SK-N-SH (cell line): ENCODE measurements at regions of chr1 and their contacts with region 1.

Region 1: GRCh38 chr1:22704440-22705067 is 6.1 kb upstream of the EPHB2 start:
- DNase-seq: peak; percentile 83
- H3K4me3 ChIP-seq: no peak overlapping the region; a peak in 1 of 4 replicates
- H3K27ac ChIP-seq: no peak overlapping the region
- H3K4me1 ChIP-seq: peaks cover 2 to 8% of the 10 kb centered on the region in 2 experiments; a peak in 2 of 4 replicates
- H3K27me3 ChIP-seq: no peaks in the 10 kb centered on the region
- CTCF ChIP-seq: peak; percentile 88
- EP300 ChIP-seq: no peak
- RAD21 ChIP-seq: peak; percentile 89

Region 2: DNA sequence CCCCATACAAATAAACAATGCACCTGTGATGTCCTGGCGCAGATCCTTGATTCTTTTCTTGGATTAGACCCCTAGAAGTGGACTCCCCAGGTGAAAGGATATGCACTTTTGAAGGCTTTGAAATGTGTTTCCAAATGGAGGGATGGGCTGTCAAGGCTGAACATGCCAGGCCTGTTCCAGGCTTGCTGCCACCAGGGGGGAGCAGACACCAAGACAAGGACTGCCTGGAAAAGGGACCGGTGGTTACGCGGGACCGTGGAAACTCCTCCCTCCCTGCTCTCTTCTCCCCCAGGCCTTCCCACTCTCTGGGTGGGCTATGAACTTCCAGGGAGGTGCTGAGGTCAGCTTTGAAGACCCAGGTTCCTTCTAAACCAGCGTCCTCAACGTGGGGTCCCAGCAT is 38.8 kb before region 1 on chr1:
- CTCF ChIA-PET with region 1: interaction called, 21 read pairs
- POLR2A ChIA-PET with region 1: no interaction called
- DNase-seq: peak; percentile 77
- H3K4me3 ChIP-seq: no peak overlapping the region; a peak in 1 of 4 replicates
- H3K27ac ChIP-seq: no peak overlapping the region
- H3K4me1 ChIP-seq: no peaks in the 10 kb centered on the region
- H3K27me3 ChIP-seq: peaks cover 20% of the 10 kb centered on the region; the same call in 1 of the 2 replicates
- CTCF ChIP-seq: peak; percentile 69
- EP300 ChIP-seq: no peak
- RAD21 ChIP-seq: peak; percentile 87

Region 3: DNA sequence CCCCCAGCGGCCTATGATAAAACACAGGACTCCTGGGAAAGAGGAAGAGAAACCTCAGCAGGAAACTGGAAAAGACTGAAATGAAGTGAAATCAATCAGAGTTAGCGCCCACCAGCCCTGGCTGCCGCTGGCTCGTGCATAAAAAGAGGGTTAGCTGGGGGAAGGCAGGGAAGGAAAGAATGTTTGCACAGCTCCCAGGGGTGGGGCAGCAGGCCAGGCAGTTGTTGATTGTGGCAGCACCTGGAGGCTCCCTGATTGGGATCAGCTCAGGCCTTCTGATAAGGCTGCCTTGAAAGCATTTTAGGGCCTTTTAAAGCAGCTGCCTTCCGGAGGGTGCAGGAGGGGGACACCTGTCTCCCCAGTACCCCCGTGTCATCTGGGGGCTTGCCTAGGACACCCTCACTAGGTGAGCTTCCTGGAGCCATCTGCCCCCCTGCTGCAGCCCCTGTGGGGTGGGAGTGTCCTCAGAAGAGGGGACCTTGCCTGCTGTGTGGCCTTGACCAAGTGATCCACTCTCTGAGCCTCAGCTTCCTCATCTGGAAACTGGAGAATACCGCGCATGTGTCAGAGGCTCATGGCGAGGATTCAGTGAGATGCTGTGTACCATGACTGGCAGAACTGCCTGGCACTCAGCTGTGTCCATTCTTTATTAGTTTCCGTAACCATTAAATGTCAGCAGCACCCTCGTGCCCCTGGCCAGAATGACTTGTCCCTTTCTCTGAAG is 12.6 kb after region 1 on chr1:
- CTCF ChIA-PET with region 1: interaction called, 20 read pairs
- POLR2A ChIA-PET with region 1: interaction called, 3 read pairs
- DNase-seq: no peak
- H3K4me3 ChIP-seq: no peak overlapping the region
- H3K27ac ChIP-seq: peak overlapping the region in 1 of 2 experiments; percentile 2; a peak in 1 of 4 replicates
- H3K4me1 ChIP-seq: peaks cover 0 to 25% of the 10 kb centered on the region in 2 experiments; a peak in 1 of 4 replicates
- H3K27me3 ChIP-seq: no peaks in the 10 kb centered on the region
- CTCF ChIP-seq: no peak
- EP300 ChIP-seq: no peak; a peak in 1 of 4 replicates
- RAD21 ChIP-seq: no peak

Region 4: DNA sequence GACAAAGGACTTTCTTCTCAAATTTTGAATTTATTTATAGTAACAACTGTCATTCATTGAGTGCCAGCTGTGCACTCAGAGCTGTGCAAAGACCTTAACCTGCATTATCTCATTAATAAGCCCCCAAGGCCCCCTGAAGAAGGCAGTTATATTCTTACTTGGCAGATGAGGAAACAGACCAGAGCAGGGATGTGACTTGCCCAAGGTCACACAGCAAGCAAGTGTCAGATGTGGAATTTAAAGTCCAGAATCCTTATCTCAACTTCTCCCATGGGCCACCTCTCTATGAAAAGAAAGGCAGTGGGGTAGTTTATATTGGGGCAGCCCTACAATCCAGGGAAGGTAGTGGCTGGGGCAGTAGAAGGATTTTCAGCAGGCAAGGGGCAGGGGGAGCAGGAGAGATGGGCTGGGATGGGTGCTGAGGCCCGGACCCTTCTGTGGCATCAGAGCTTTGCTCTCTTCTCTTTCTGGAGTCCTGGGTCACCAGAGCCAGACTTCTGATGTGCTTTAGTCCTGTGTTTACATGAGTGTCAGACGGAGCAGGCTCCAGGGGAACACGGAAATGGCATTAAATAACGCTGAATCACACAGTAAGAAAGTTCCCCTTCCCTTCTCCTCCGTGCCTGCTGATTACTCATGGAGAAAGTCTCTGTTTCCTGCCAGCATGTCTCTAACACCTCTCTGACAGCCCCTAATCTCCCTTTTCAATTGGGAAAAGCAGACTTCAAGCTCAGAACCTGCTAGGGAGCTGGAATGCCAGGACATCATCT is 45.5 kb after region 1 on chr1:
- CTCF ChIA-PET with region 1: interaction called, 19 read pairs
- POLR2A ChIA-PET with region 1: no interaction called
- DNase-seq: no peak
- H3K4me3 ChIP-seq: no peak overlapping the region
- H3K27ac ChIP-seq: peak overlapping the region; percentile 68 to 96
- H3K4me1 ChIP-seq: peaks cover 41 to 51% of the 10 kb centered on the region in 2 experiments
- H3K27me3 ChIP-seq: no peaks in the 10 kb centered on the region
- CTCF ChIP-seq: no peak
- EP300 ChIP-seq: peak in 1 of 2 experiments; percentile 73; a peak in 2 of 4 replicates
- RAD21 ChIP-seq: no peak

Region 5: GRCh38 chr1:22861764-22862440 is 157.3 kb after region 1 on chr1:
- CTCF ChIA-PET with region 1: interaction called, 166 read pairs
- POLR2A ChIA-PET with region 1: no interaction called
- DNase-seq: peak; percentile 86
- H3K4me3 ChIP-seq: no peak overlapping the region; a peak in 1 of 4 replicates
- H3K27ac ChIP-seq: peak overlapping the region; percentile 31 to 45; a peak in 3 of 4 replicates
- H3K4me1 ChIP-seq: peaks cover 4 to 9% of the 10 kb centered on the region in 2 experiments; a peak in 3 of 4 replicates
- H3K27me3 ChIP-seq: no peaks in the 10 kb centered on the region
- CTCF ChIP-seq: peak; percentile 98
- EP300 ChIP-seq: no peak
- RAD21 ChIP-seq: peak; percentile 88

Region 6: DNA sequence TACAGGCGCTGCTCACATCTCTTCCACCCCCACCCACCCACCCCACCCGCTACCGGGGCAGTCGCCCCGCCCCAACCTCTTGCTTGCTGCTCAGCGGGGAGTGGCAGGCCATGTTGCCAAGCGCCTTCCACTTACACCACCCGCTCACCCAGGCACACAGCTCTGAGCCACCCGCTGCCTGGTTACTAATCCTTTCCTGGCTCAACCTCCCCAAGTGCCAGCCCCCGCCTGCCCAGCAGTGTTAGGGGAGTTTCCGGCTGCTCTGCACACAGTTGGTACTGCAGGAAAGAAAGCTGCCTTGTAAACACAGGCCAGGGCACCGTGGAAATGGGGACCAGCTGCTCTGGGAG is 211.9 kb after region 1 on chr1:
- CTCF ChIA-PET with region 1: interaction called, 14 read pairs
- POLR2A ChIA-PET with region 1: no interaction called
- DNase-seq: no peak
- H3K4me3 ChIP-seq: no peak overlapping the region
- H3K27ac ChIP-seq: no peak overlapping the region
- H3K4me1 ChIP-seq: no peaks in the 10 kb centered on the region
- H3K27me3 ChIP-seq: no peaks in the 10 kb centered on the region
- CTCF ChIP-seq: no peak
- EP300 ChIP-seq: no peak
- RAD21 ChIP-seq: no peak